ENCODE measurements at regions of chr3 and their contacts with region 1.

Region 1: DNA sequence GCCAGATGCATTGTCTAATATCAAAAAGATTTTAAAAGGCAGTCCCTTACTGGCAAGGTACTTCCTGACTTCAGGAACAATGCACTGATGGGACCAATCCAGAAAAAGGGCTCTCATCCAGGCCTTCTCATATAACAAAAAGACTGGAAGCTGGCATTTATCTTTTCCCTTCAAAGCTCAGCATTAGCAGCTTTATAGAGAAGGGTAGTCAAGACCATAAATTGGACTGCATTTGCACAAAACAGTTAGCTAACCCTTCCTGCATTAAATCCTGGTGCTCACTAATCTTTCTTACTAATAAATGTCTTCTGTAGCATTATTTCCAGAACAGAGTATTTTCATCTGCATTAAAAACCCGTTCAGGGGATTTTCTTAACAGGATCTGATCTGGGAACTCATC is 46.0 kb upstream of the NEK10 start:
- DNase-seq: no peak
- ATAC-seq: no peak
- H3K4me3 ChIP-seq: no peak overlapping the region
- H3K4me3 Mint-ChIP-seq: no peak overlapping the region
- H3K27ac ChIP-seq: no peak overlapping the region
- H3K27ac Mint-ChIP-seq: no peak overlapping the region
- H3K4me1 ChIP-seq: no peaks in the 10 kb centered on the region
- H3K4me1 Mint-ChIP-seq: peaks cover 3% of the 10 kb centered on the region
- H3K27me3 ChIP-seq: no peaks in the 10 kb centered on the region
- H3K27me3 Mint-ChIP-seq: no peaks in the 10 kb centered on the region
- CTCF ChIP-seq: no peak

Region 2: GRCh38 chr3:27454914-27455313 is 39.7 kb after region 1 on chr3:
- CTCF ChIA-PET with region 1: no interaction called
- POLR2A ChIA-PET with region 1: no interaction called
- intact Hi-C with region 1: loop called (anchors 5 kb)
- DNase-seq: no peak
- ATAC-seq: no peak
- H3K4me3 ChIP-seq: no peak overlapping the region
- H3K4me3 Mint-ChIP-seq: no peak overlapping the region
- H3K27ac ChIP-seq: no peak overlapping the region
- H3K27ac Mint-ChIP-seq: peak overlapping the region; percentile 11
- H3K4me1 ChIP-seq: peaks cover 7 to 8% of the 10 kb centered on the region in 2 donors
- H3K4me1 Mint-ChIP-seq: peaks cover 50% of the 10 kb centered on the region
- H3K27me3 ChIP-seq: no peaks in the 10 kb centered on the region
- H3K27me3 Mint-ChIP-seq: no peaks in the 10 kb centered on the region
- CTCF ChIP-seq: no peak

Measured in B cell (primary cell).